OCI-LY7 (cell line): ENCODE measurements at regions of chr5 and their contacts with region 1.

Region 1: GRCh38 chr5:84255315-84255714 is 129.4 kb downstream of the EDIL3 start:
- DNase-seq: peak; percentile 10
- H3K4me3 ChIP-seq: no peak overlapping the region
- H3K27ac ChIP-seq: no peak overlapping the region
- H3K4me1 ChIP-seq: no peaks in the 10 kb centered on the region
- CTCF ChIP-seq: peak; percentile 60

Region 2: DNA sequence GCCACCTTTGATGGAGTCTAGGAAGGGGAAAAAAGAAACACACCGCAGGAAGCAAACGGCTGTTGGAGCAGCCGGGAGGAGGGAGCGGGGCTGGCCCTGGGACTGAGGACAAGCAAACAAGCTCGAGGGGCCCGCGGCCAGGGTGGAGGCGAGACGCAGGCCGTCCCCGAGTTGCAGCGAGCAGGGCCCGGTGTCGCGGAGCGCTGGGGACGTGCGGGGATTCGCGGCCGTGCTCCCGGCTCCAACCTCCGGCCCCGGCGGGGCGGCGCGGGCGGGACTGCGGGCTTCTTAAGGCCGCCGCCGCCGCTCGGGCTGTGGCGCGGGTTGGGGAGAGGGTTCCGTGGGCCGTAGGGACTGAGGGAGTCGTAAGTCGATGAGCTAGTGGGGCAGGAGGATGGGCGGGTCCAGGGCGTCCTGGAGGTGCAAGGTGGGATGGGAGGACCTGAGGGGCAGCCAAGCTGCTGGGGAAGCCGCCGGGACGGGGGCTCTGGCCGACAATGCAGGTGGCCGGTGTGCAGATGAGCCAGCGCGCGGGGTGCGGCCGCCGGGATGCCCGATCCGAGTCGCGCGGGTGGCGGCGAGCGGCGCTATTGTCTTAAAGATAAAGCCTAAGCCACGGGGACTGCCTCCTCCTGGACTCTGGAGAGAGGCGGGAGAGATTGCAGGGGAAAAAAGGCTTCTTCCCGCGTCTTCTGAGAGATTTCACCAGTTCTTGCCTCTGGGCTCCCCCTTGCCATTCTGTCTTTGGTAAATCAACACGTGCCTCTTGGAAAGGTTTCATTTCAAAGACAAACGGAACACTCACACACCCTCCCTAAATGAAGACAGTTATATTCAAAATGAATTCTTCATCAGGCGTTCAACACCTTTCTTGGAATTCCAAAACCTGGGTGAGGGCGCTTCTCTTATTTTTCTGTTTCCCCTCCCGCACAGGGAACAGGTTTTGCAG is 533.1 kb before region 1 on chr5:
- CTCF ChIA-PET with region 1: no interaction called
- POLR2A ChIA-PET with region 1: no interaction called
- intact Hi-C with region 1: loop called (anchors 5 kb)
- DNase-seq: no peak
- H3K4me3 ChIP-seq: no peak overlapping the region
- H3K27ac ChIP-seq: no peak overlapping the region
- H3K4me1 ChIP-seq: no peaks in the 10 kb centered on the region
- CTCF ChIP-seq: no peak

Region 3: GRCh38 chr5:84642795-84643194 is 387.5 kb after region 1 on chr5:
- CTCF ChIA-PET with region 1: no interaction called
- POLR2A ChIA-PET with region 1: no interaction called
- intact Hi-C with region 1: no loop called
- DNase-seq: no peak
- H3K4me3 ChIP-seq: no peak overlapping the region
- H3K27ac ChIP-seq: no peak overlapping the region
- H3K4me1 ChIP-seq: no peaks in the 10 kb centered on the region
- CTCF ChIP-seq: no peak